Gastrocnemius medialis (tissue), 4 donors: ENCODE measurements at regions of chr3 and their contacts with region 1.

Region 1: DNA sequence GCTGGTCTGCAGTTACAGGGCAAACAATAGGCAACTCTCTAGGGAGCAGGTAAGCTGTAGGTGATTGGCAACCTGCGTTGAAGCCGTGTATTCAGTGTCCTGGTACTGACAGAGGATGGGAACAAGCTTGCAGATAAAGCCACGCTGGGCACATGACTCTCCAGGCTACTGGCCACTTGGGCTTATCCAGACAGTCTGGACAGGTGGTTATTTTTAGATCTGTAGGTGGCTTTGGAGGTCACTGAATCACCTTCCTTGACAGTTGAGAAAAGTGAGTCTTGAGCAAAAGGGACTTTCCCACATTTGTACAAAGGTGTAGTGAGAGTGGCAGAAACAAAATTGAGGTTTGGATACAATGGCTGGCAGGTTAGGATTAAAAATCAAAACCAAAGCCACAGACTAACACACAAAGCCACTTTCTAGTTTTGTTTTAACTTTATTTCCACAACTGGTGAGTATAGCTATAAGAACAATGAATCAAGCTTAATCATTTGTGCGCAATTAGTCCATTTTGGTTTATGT is 22.3 kb upstream of the IL1RAP start:
- DNase-seq: peak; percentile 32 to 54
- ATAC-seq: peak; percentile 90 to 96
- H3K4me3 ChIP-seq: no peak overlapping the region
- H3K27ac ChIP-seq: peak overlapping the region in 3 of 4 donors; percentile 19 to 42 (median 38)
- H3K4me1 ChIP-seq: peaks cover 3 to 7% of the 10 kb centered on the region in 2 donors
- H3K27me3 ChIP-seq: no peaks in the 10 kb centered on the region
- CTCF ChIP-seq: no peak
- POLR2A ChIP-seq: no peak

Region 2: GRCh38 chr3:190345027-190345821 is 146.4 kb before region 1 on chr3:
- in situ Hi-C with region 1: no loop called
- intact Hi-C with region 1: no loop called
- DNase-seq: no peak
- ATAC-seq: no peak
- H3K4me3 ChIP-seq: no peak overlapping the region
- H3K27ac ChIP-seq: no peak overlapping the region
- H3K4me1 ChIP-seq: no peaks in the 10 kb centered on the region
- H3K27me3 ChIP-seq: no peaks in the 10 kb centered on the region
- CTCF ChIP-seq: no peak
- POLR2A ChIP-seq: no peak

Region 3: DNA sequence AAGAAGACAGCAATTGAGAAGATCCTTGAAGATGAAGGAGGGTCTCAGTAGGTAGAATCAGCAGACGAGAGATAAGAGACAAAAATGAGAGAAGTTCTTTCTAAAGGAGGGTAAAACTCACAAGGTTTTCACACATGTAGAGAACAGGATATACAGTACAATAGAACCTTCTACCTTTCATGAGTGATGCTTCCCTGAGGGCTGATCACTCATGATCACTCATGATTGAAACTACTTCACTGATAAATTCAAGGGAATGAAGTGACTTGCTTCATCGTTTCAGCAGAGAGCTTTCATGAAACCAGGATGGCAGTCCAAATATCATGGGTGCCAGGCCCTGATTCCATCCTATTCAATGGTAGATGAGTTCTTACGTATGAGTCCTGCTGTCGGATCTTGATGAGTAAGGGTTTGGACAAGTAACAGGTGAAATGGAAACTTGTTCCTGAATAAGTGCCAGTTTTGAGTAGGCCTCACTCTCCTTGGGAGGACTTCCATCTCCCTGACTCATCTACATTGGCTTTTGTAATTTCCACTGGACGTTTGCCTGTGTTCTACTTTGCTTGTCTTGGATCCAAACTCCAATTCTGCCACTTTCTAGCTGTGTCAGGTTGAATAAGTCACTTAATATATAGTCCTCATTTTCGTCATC is 113.2 kb before region 1 on chr3:
- in situ Hi-C with region 1: no loop called
- intact Hi-C with region 1: loop called (anchors 10 kb)
- DNase-seq: peak; percentile 40 to 48
- ATAC-seq: peak; percentile 100
- H3K4me3 ChIP-seq: no peak overlapping the region
- H3K27ac ChIP-seq: peak overlapping the region in 1 of 4 donors; percentile 10
- H3K4me1 ChIP-seq: no peaks in the 10 kb centered on the region
- H3K27me3 ChIP-seq: no peaks in the 10 kb centered on the region
- CTCF ChIP-seq: no peak
- POLR2A ChIP-seq: no peak

Region 4: GRCh38 chr3:190458040-190458439 is 33.6 kb before region 1 on chr3:
- in situ Hi-C with region 1: no loop called
- intact Hi-C with region 1: no loop called
- DNase-seq: no peak
- ATAC-seq: no peak
- H3K4me3 ChIP-seq: no peak overlapping the region
- H3K27ac ChIP-seq: no peak overlapping the region
- H3K4me1 ChIP-seq: no peaks in the 10 kb centered on the region
- H3K27me3 ChIP-seq: no peaks in the 10 kb centered on the region
- CTCF ChIP-seq: no peak
- POLR2A ChIP-seq: no peak

Region 5: GRCh38 chr3:190862209-190863118 is 370.9 kb after region 1 on chr3 and contains the start of gene GMNC:
- in situ Hi-C with region 1: no loop called
- intact Hi-C with region 1: no loop called
- DNase-seq: peak; percentile 78 to 82
- ATAC-seq: peak; percentile 98
- H3K4me3 ChIP-seq: peak within 1 kb of the TSS; percentile 55 to 73 (median 64)
- H3K27ac ChIP-seq: peak within 1 kb of the TSS; percentile 67 to 87 (median 81)
- H3K4me1 ChIP-seq: no peaks in the 10 kb centered on the region
- H3K27me3 ChIP-seq: no peaks in the 10 kb centered on the region
- CTCF ChIP-seq: no peak
- POLR2A ChIP-seq: peak; percentile 68 to 82
- total RNA-seq, gene GMNC: not detected

Region 6: GRCh38 chr3:190972840-190973270 is 481.3 kb after region 1 on chr3:
- in situ Hi-C with region 1: no loop called
- intact Hi-C with region 1: no loop called
- DNase-seq: no peak
- ATAC-seq: no peak
- H3K4me3 ChIP-seq: no peak overlapping the region
- H3K27ac ChIP-seq: no peak overlapping the region
- H3K4me1 ChIP-seq: no peaks in the 10 kb centered on the region
- H3K27me3 ChIP-seq: no peaks in the 10 kb centered on the region
- CTCF ChIP-seq: no peak
- POLR2A ChIP-seq: no peak